PC-9 (cell line): ENCODE measurements at regions of chr9 and their contacts with region 1.

Region 1: DNA sequence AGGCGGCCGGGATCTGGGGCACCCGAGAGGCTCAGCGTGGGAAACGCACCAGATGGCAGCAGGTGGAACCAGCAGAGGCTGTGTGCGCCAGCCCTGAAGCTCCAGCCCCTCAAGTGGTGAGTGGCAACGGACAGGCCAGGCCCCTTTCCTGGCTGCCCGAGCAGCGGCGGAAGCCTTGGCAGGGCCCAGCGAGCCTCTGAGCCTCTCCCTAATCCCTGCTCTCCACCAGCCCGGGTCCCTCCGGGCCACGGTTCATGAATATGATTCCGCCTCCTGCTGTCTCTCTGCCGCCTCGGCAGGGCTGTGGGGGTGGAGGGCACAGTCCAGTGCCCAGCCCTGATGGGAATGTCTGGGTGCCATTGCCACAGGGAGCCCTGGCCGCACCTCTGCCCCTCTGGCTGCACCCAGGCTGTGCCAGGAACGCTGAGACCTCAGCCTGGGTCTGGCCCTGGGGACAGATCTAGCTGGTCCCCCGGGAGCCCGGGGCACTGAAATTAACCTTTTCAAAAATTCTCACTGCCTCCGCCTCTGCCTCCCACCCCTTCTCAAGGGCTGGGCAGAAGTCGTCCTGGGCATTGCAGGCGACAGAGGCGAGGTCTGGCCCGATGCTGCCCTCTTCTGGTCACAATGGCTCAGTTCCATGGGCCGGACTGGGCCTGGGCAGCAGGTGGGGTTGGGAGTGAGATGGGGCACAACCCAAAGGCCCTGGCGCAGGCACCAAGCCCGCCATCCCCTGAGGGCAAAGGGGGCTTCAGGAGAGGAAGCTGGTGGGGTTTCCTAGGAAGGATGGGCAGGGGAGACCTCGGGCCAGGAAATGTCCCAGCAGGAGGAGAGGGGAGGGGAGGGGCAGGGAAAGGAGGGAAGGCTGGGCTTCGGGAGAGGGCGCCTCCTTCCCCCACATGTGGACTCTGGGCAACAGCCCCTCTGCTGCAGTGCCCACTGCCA is 20.3 kb downstream of the CCDC187 start:
- DNase-seq: peak; percentile 49 to 86
- H3K4me3 ChIP-seq: no peak overlapping the region
- H3K27ac ChIP-seq: no peak overlapping the region
- H3K4me1 ChIP-seq: no peaks in the 10 kb centered on the region
- H3K27me3 ChIP-seq: peaks cover 59% of the 10 kb centered on the region
- CTCF ChIP-seq: peak; percentile 85

Region 2: DNA sequence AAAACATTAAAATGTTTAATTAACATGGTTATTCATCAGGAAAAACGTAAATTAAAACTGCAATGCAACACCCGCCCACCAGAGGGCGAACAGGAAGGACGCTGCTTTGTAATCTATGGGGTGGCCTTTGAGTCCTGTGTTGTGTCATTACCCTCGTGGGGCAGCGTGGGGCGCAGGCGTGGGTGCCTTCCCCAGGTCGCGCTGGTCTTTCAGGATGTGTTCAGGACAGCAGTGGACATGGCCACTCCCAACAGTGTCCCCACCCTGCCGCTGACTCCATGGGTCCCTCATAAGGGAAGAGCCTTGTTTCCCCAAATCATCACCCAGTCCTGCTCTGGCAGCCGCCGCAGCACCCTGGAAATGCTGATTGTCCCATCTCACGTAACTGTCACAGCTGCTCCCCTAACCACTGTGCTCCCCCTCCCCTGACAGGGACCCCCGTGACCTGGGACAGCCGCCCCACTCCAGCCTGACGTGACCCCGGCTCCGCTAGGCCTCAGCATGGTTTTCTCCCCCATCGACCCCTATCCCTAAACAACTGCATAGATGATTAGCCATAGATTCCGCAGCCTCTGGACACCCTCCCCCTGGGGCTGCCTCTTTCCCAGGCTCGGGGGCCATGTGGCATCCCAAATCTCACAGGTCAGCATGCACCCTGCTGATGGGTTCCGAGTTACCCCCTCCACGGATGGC is 680.6 kb before region 1 on chr9:
- CTCF ChIA-PET with region 1: no interaction called
- POLR2A ChIA-PET with region 1: no interaction called
- intact Hi-C with region 1: loop called (anchors 1 kb)
- DNase-seq: peak in 1 of 2 experiments; percentile 48
- H3K4me3 ChIP-seq: no peak overlapping the region
- H3K27ac ChIP-seq: no peak overlapping the region
- H3K4me1 ChIP-seq: no peaks in the 10 kb centered on the region
- H3K27me3 ChIP-seq: peaks cover 70% of the 10 kb centered on the region
- CTCF ChIP-seq: peak; percentile 90

Region 3: GRCh38 chr9:135961277-135961705 is 322.3 kb before region 1 on chr9 and contains the start of gene UBAC1:
- CTCF ChIA-PET with region 1: no interaction called
- POLR2A ChIA-PET with region 1: no interaction called
- intact Hi-C with region 1: loop called (anchors 10 kb)
- DNase-seq: peak; percentile 64 to 87
- H3K4me3 ChIP-seq: peak within 1 kb of the TSS; percentile 47; the same call in 1 of the 2 replicates
- H3K27ac ChIP-seq: no peak within 1 kb of the TSS
- H3K4me1 ChIP-seq: no peaks in the 10 kb centered on the region
- H3K27me3 ChIP-seq: no peaks in the 10 kb centered on the region
- CTCF ChIP-seq: no peak
- total RNA-seq, gene UBAC1: 27.6 and 37.1 TPM in 2 replicates

Region 4: GRCh38 chr9:136143216-136144001 is 140.2 kb before region 1 on chr9:
- CTCF ChIA-PET with region 1: no interaction called
- POLR2A ChIA-PET with region 1: no interaction called
- intact Hi-C with region 1: loop called (anchors 2 kb)
- DNase-seq: peak in 1 of 2 experiments; percentile 56
- H3K4me3 ChIP-seq: no peak overlapping the region
- H3K27ac ChIP-seq: no peak overlapping the region
- H3K4me1 ChIP-seq: no peaks in the 10 kb centered on the region
- H3K27me3 ChIP-seq: peaks cover 45% of the 10 kb centered on the region
- CTCF ChIP-seq: peak; percentile 54; the same call in 1 of the 2 replicates

Region 5: GRCh38 chr9:136170006-136170901 is 113.3 kb before region 1 on chr9:
- CTCF ChIA-PET with region 1: no interaction called
- POLR2A ChIA-PET with region 1: no interaction called
- intact Hi-C with region 1: loop called (anchors 1 kb)
- DNase-seq: peak in 1 of 2 experiments; percentile 18
- H3K4me3 ChIP-seq: no peak overlapping the region
- H3K27ac ChIP-seq: no peak overlapping the region
- H3K4me1 ChIP-seq: peaks cover 14% of the 10 kb centered on the region
- H3K27me3 ChIP-seq: peaks cover 33% of the 10 kb centered on the region
- CTCF ChIP-seq: peak; percentile 84

Region 6: GRCh38 chr9:136225748-136226679 is 57.5 kb before region 1 on chr9:
- CTCF ChIA-PET with region 1: no interaction called
- POLR2A ChIA-PET with region 1: no interaction called
- intact Hi-C with region 1: loop called (anchors 5 kb)
- DNase-seq: peak in 1 of 2 experiments; percentile 61
- H3K4me3 ChIP-seq: no peak overlapping the region
- H3K27ac ChIP-seq: no peak overlapping the region
- H3K4me1 ChIP-seq: peaks cover 30% of the 10 kb centered on the region
- H3K27me3 ChIP-seq: no peaks in the 10 kb centered on the region
- CTCF ChIP-seq: peak; percentile 88

Region 7: DNA sequence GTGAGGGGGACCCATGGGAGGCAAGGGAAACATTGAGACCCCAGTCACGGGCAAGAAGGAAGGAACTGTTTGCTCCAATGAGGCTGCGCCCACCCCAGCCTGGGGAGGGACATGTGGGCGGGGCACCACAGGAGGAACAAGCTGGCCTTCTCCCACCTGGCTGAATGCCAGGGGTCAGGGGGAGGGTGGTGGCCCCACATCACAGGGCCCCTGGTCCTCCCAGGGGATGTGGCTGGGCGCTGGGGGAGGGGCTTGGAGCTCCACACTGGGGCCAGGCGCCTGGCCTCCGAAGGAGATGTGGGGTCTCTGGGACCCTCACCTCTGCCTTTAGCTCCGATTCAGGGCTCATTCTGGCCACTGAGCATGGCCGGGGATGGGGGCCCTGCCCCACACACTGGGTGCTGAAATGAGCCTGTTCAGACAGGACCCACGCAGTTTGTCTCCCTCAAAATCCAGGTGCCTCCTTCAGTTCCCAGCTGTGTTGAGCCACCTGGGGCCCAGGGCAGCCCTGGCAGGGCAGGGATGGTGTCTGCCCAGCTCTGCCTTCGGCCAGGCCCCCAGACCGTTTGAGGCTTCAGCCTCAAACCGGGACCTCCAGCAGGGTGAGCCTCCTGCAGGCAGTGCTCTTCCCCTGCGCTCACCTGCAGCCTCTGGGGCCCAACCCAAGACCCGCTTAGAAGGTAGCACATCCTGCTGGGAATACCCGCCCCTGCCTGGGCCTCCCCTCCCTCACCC is 295.5 kb after region 1 on chr9:
- CTCF ChIA-PET with region 1: no interaction called
- POLR2A ChIA-PET with region 1: interaction called, 10 read pairs
- intact Hi-C with region 1: no loop called
- DNase-seq: peak in 1 of 2 experiments; percentile 34
- H3K4me3 ChIP-seq: no peak overlapping the region; the same call in 1 of the 2 replicates
- H3K27ac ChIP-seq: peak overlapping the region; percentile 70; the same call in 1 of the 2 replicates
- H3K4me1 ChIP-seq: peaks cover 26% of the 10 kb centered on the region
- H3K27me3 ChIP-seq: no peaks in the 10 kb centered on the region
- CTCF ChIP-seq: no peak